Mucosa of descending colon (tissue), 3 donors: ENCODE measurements at regions of chr11 and their contacts with region 1.

Region 1: DNA sequence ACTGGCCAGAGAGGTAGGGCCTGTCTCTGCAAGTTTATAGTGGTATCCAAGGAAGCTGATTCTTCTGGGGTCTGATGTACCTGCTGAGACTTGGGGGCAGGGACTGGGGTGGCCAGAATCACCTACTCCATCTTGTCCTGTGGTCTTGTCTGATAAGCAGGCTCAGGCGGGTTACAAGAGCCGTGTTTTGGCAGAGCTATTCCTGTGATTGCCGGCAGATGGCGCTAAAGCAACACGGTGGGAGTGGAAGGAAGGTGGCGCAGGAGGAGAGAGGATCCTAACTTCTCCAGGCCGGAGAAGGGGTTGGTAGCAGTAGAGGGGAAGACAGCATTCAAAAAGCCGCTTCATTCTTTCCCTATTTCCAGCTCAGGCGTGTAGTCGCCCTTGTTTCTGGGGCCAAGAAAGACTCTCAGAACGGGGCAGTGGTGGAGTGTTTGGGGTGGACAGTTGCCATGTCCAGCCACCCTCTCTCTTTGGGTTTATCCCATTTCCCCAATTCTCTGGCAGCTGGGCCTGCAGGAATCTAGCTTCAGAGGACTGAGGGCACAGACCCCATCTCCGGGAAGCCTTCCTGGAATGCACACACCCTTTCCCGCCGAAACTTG is 15.1 kb downstream of the CHRM1 start:
- DNase-seq: peak; percentile 74 to 85 (median 79)
- ATAC-seq: peak; percentile 75
- H3K4me3 ChIP-seq: no peak overlapping the region
- H3K4me1 ChIP-seq: peaks cover 9% of the 10 kb centered on the region
- CTCF ChIP-seq: peak; percentile 97

Region 2: GRCh38 chr11:62816557-62816956 is 89.5 kb before region 1 on chr11:
- intact Hi-C with region 1: no loop called
- DNase-seq: no peak
- ATAC-seq: no peak
- H3K4me3 ChIP-seq: no peak overlapping the region
- H3K4me1 ChIP-seq: no peaks in the 10 kb centered on the region
- CTCF ChIP-seq: no peak

Region 3: GRCh38 chr11:63023841-63024648 is 118.0 kb after region 1 on chr11:
- intact Hi-C with region 1: loop called (anchors 2 kb)
- DNase-seq: peak; percentile 75 to 96 (median 89)
- ATAC-seq: peak; percentile 97
- H3K4me3 ChIP-seq: no peak overlapping the region
- H3K4me1 ChIP-seq: no peaks in the 10 kb centered on the region
- CTCF ChIP-seq: peak; percentile 100